PC-3 (cell line): ENCODE measurements at regions of chr4 and their contacts with region 1.

Region 1: GRCh38 chr4:124322234-124323065 is 390.1 kb downstream of the ANKRD50 start:
- DNase-seq: peak; percentile 69
- ATAC-seq: no peak
- H3K4me3 ChIP-seq: no peak overlapping the region
- H3K27ac ChIP-seq: no peak overlapping the region
- H3K4me1 ChIP-seq: peaks cover 17% of the 10 kb centered on the region
- H3K27me3 ChIP-seq: no peaks in the 10 kb centered on the region
- CTCF ChIP-seq: peak; percentile 63

Region 2: DNA sequence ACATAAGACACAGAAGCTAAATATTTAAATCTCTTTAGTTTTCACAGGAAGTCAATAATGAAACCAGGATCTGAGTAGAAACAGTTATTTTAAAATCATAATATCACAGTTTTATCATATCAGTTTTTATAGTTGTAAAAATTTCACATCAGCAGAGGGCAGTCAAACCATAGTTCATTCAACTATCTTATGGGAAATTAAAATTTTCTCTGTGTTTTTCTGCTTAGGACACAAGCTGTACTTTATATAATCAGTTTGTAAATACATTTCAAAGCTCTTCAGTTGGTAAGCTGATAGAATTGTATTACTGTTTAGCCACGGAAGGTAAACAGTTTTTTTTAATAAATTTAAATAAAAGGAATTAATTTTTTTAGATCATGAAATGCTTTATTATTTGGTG is 1195.2 kb before region 1 on chr4:
- CTCF ChIA-PET with region 1: no interaction called
- POLR2A ChIA-PET with region 1: no interaction called
- intact Hi-C with region 1: loop called (anchors 10 kb)
- DNase-seq: peak; percentile 37
- ATAC-seq: no peak
- H3K4me3 ChIP-seq: no peak overlapping the region
- H3K27ac ChIP-seq: no peak overlapping the region
- H3K4me1 ChIP-seq: peaks cover 7% of the 10 kb centered on the region
- H3K27me3 ChIP-seq: no peaks in the 10 kb centered on the region
- CTCF ChIP-seq: peak; percentile 54

Region 3: GRCh38 chr4:123564758-123565346 is 757.6 kb before region 1 on chr4:
- CTCF ChIA-PET with region 1: no interaction called
- POLR2A ChIA-PET with region 1: no interaction called
- intact Hi-C with region 1: no loop called
- DNase-seq: peak; percentile 78
- ATAC-seq: peak; percentile 80
- H3K4me3 ChIP-seq: no peak overlapping the region
- H3K27ac ChIP-seq: no peak overlapping the region
- H3K4me1 ChIP-seq: peaks cover 27% of the 10 kb centered on the region
- H3K27me3 ChIP-seq: no peaks in the 10 kb centered on the region
- CTCF ChIP-seq: peak; percentile 96

Region 4: GRCh38 chr4:123671633-123672404 is 650.6 kb before region 1 on chr4:
- CTCF ChIA-PET with region 1: no interaction called
- POLR2A ChIA-PET with region 1: no interaction called
- intact Hi-C with region 1: loop called (anchors 5 kb)
- DNase-seq: no peak
- ATAC-seq: no peak
- H3K4me3 ChIP-seq: no peak overlapping the region
- H3K27ac ChIP-seq: no peak overlapping the region
- H3K4me1 ChIP-seq: peaks cover 32% of the 10 kb centered on the region
- H3K27me3 ChIP-seq: no peaks in the 10 kb centered on the region
- CTCF ChIP-seq: no peak

Region 5: GRCh38 chr4:123776254-123776653 is 546.2 kb before region 1 on chr4:
- CTCF ChIA-PET with region 1: interaction called, 3 read pairs
- POLR2A ChIA-PET with region 1: no interaction called
- intact Hi-C with region 1: loop called (anchors 2 kb)
- DNase-seq: no peak
- ATAC-seq: no peak
- H3K4me3 ChIP-seq: no peak overlapping the region
- H3K27ac ChIP-seq: no peak overlapping the region
- H3K4me1 ChIP-seq: no peaks in the 10 kb centered on the region
- H3K27me3 ChIP-seq: no peaks in the 10 kb centered on the region
- CTCF ChIP-seq: no peak

Region 6: GRCh38 chr4:124144238-124144654 is 178.2 kb before region 1 on chr4:
- CTCF ChIA-PET with region 1: no interaction called
- POLR2A ChIA-PET with region 1: no interaction called
- intact Hi-C with region 1: no loop called
- DNase-seq: no peak
- ATAC-seq: no peak
- H3K4me3 ChIP-seq: no peak overlapping the region
- H3K27ac ChIP-seq: no peak overlapping the region
- H3K4me1 ChIP-seq: no peaks in the 10 kb centered on the region
- H3K27me3 ChIP-seq: no peaks in the 10 kb centered on the region
- CTCF ChIP-seq: no peak

Region 7: GRCh38 chr4:124243671-124244366 is 78.6 kb before region 1 on chr4:
- CTCF ChIA-PET with region 1: no interaction called
- POLR2A ChIA-PET with region 1: no interaction called
- intact Hi-C with region 1: no loop called
- DNase-seq: no peak
- ATAC-seq: no peak
- H3K4me3 ChIP-seq: no peak overlapping the region
- H3K27ac ChIP-seq: no peak overlapping the region
- H3K4me1 ChIP-seq: no peaks in the 10 kb centered on the region
- H3K27me3 ChIP-seq: no peaks in the 10 kb centered on the region
- CTCF ChIP-seq: no peak

Region 8: GRCh38 chr4:124262211-124263179 is 60.0 kb before region 1 on chr4:
- CTCF ChIA-PET with region 1: no interaction called
- POLR2A ChIA-PET with region 1: no interaction called
- intact Hi-C with region 1: loop called (anchors 1 kb)
- DNase-seq: peak; percentile 87
- ATAC-seq: peak; percentile 98
- H3K4me3 ChIP-seq: no peak overlapping the region; the same call in 1 of the 2 replicates
- H3K27ac ChIP-seq: no peak overlapping the region
- H3K4me1 ChIP-seq: peaks cover 8% of the 10 kb centered on the region
- H3K27me3 ChIP-seq: no peaks in the 10 kb centered on the region
- CTCF ChIP-seq: peak; percentile 87